Psoas muscle (tissue), 8 donors: ENCODE measurements at regions of chr14 and their contacts with region 1.

Region 1: DNA sequence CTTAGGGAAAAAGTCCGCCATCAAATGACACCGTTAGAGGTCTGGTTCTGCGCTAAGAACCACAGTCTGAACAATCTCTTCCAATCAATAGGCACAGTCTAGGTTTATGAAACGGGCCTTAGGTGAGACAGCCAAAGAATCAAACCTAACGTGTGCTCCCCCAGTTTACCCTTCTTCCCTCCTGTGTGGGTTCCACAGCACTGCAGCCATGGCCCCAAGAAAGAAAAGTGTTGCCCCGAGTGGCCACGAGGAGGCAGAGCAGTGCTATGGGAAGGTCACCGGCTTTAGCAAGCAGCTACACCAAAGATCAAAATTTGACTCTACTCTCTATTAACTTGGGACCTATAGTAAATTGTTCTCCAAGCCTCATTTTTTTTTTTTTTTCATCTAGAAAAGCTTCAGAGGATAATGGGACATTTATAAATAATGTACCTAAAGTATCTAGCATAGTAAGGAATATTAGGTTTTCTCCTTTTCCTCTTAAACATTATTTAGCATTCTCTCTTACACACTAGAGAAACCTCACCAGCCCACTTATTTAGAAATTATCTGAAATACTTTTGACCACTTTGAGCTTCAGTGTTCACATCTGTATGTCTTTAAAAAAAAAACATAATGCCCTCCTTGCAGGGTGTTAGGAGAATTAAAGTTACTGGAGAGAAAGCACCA is 70.2 kb upstream of the GPHB5 start:
- DNase-seq: peak; percentile 62 to 72
- ATAC-seq: peak; percentile 74 to 96 (median 92)
- H3K4me3 ChIP-seq: no peak overlapping the region
- H3K27ac ChIP-seq: no peak overlapping the region
- H3K4me1 ChIP-seq: no peaks in the 10 kb centered on the region
- H3K27me3 ChIP-seq: no peaks in the 10 kb centered on the region
- CTCF ChIP-seq: peak; percentile 81

Region 2: GRCh38 chr14:63343878-63344277 is 45.0 kb before region 1 on chr14:
- intact Hi-C with region 1: no loop called
- DNase-seq: no peak
- ATAC-seq: no peak
- H3K4me3 ChIP-seq: no peak overlapping the region
- H3K27ac ChIP-seq: no peak overlapping the region
- H3K4me1 ChIP-seq: no peaks in the 10 kb centered on the region
- H3K27me3 ChIP-seq: no peaks in the 10 kb centered on the region
- CTCF ChIP-seq: no peak

Region 3: DNA sequence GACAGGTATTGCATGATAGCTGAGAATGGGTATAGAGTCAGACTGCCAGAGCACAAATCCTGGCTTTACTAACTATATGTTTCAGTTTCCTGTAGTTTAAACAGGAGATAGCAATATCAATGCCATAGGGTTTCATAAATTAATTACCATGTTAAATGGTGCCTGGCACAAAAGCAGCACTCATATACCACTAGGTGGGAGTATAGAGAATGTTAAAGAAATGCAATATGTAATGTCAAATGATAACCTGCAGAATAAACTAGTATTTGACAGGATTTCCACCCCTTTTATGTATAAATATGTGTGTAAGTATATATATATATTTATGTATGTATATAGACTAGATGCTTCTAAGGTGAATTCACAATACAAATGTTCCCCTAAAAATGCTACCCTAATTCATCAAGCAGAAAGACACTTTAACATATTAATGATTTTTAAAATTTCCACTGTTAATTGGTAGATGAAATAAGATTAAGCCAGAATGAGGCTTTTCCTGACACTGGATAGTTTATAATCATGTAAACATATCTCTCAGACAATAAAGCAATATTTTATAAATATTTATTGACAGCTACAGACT is 244.1 kb after region 1 on chr14:
- intact Hi-C with region 1: loop called in 1 of 2 experiments (anchors 10 kb)
- DNase-seq: no peak
- ATAC-seq: no peak
- H3K4me3 ChIP-seq: no peak overlapping the region
- H3K27ac ChIP-seq: no peak overlapping the region
- H3K4me1 ChIP-seq: no peaks in the 10 kb centered on the region
- H3K27me3 ChIP-seq: no peaks in the 10 kb centered on the region
- CTCF ChIP-seq: peak; percentile 39